ENCODE measurements at regions of chr6 and their contacts with region 1.

Region 1: DNA sequence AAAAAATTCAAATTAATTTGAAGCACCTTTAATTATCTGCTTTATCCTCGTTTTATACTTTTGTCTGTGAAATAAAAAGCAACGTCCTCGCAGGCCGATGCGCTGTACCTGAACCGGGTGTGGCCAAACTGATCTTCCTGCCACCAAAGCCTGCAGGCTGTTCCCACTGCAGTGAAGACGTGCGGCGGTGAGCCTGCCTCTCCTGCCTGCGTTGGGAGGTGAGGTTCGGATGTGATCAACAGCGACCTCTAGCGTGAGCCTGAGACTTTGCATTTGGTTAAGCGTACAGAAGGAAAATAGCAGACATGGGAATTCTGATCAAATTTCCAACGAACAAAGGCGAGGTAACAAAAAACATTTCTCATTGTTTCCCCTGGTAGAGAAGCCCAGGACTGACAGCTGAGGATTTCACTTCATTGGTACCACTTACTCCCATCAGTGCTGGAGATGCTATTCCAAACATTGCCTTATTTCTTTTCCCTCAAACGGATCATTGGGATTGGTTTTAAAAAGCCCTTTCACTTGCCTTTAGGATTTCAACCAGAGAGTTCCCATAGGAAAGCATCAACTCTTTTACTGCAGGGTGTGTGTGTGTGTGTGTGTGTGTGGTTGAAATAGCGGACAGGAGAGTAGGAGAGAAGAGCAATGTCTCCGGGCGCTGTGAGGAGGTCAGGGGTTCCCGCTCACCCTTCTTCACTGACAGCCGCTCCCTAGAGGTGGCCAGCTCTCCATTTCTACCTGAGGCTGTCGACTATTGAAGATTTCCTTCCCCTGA is 56.6 kb upstream of the CCN6 start:
- DNase-seq: peak; percentile 80
- ATAC-seq: peak; percentile 96
- H3K4me3 ChIP-seq: no peak overlapping the region
- H3K27ac ChIP-seq: no peak overlapping the region
- H3K4me1 ChIP-seq: no peaks in the 10 kb centered on the region
- H3K27me3 ChIP-seq: peaks cover 2% of the 10 kb centered on the region; the same call in 1 of the 2 replicates
- CTCF ChIP-seq: peak; percentile 95
- POLR2A ChIP-seq: 0 out of 2 replicates have a peak, but pooled peaks have one; percentile 53
- RAD21 ChIP-seq: peak; percentile 98

Region 2: GRCh38 chr6:111734068-111735061 is 262.9 kb before region 1 on chr6:
- CTCF ChIA-PET with region 1: no interaction called
- POLR2A ChIA-PET with region 1: interaction called, 15 read pairs
- dilution Hi-C with region 1: no loop called
- in situ Hi-C with region 1: no loop called
- intact Hi-C with region 1: no loop called
- DNase-seq: peak; percentile 40
- ATAC-seq: peak; percentile 36
- H3K4me3 ChIP-seq: no peak overlapping the region
- H3K27ac ChIP-seq: peak overlapping the region; percentile 12; the same call in 1 of the 2 replicates
- H3K4me1 ChIP-seq: peaks cover 20% of the 10 kb centered on the region
- H3K27me3 ChIP-seq: no peaks in the 10 kb centered on the region
- CTCF ChIP-seq: no peak
- POLR2A ChIP-seq: no peak
- RAD21 ChIP-seq: no peak

Region 3: DNA sequence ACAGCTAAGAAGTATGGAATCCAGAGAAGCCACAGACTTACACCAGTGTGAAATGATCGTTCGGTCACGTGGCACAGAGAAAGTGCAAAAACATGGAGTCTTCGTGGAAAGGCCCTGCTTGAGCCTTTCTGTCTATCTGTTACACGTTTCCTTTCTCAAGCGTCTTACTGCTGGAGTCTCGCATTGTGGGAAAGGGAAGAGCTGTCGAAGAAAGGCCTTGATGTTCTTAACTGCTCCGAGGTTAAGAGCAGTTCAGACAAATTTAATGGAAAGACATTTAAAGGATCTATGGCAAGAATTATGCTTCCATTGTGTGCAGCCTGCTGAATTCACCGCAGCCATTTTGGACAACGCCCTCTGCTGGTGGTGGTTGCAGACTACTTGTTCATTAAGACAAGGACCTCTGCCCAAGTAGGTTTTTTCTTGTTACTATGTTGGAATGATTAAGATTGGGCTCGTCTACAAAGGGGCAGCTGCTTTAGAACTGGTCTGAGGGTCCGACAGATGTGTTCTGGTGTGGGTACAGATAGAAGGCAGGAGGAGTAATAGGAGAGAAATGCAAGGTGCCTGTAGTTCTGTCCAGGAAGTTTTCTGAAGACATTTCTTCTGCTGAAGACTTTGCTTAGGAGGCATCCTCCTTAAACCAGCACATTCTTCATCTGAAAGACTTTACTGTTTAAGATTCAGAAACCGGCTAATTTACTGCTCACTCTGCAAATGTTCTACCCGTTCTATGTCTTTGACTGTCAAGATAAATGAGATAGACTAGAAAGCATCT is 32.0 kb after region 1 on chr6:
- CTCF ChIA-PET with region 1: no interaction called
- POLR2A ChIA-PET with region 1: no interaction called
- dilution Hi-C with region 1: no loop called
- in situ Hi-C with region 1: no loop called
- intact Hi-C with region 1: no loop called
- DNase-seq: peak; percentile 74
- ATAC-seq: peak; percentile 66; the same call in 1 of the 2 replicates
- H3K4me3 ChIP-seq: no peak overlapping the region
- H3K27ac ChIP-seq: no peak overlapping the region
- H3K4me1 ChIP-seq: no peaks in the 10 kb centered on the region
- H3K27me3 ChIP-seq: peaks cover 15% of the 10 kb centered on the region
- CTCF ChIP-seq: peak; percentile 68
- POLR2A ChIP-seq: no peak
- RAD21 ChIP-seq: peak; percentile 66

Measured in IMR-90 (cell line).